ENCODE measurements at regions of chr2 and their contacts with region 1.

Region 1: DNA sequence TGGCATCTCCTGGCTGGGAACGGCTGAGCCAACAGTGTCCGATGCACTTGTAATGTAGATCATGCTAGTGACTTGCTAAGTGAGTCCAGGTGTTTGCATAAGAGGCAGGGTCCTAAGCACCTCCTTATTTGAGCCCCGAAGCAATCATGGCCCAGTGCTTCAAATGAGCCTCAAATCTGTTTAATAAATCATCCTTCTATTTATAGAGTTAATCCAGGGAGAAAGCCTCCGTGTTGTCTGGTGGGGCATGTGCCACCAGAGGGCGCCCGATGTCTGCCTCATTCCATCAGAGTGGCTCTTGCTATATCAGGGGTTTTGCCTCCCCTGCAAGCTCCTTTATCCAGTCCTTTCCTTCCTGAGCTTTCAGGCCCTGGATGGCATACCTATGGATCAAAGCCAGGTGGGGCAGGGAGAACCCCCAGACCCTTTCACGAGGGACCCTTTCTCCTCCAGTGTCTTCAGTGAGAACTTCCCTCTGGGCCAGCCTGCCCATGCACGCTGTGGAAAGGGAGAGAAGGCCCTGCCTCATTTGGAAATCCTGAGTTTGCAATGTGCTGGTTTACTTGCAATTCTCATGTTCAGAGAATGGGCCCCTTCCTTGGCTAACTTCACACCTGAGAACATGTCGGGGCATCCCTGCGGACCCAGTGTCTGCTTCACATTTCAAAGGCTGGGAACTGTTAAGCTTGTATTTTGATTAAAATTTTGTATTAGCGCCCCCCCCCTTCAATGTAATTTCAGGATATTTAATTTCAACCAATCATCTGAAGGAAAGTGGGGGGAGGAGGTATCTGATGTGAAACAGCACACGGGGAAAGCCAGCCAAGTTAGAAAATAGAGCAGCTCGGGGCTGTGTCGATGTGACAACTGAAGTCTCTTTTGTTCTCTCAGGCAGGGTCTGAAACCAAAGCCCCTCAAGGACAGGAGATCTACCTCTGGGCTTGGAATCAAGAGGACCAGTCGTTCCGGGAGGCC is 39.7 kb downstream of the RDH14 start:
- DNase-seq: peak; percentile 50
- H3K4me3 ChIP-seq: no peak overlapping the region
- H3K27ac ChIP-seq: no peak overlapping the region
- H3K4me1 ChIP-seq: no peaks in the 10 kb centered on the region
- H3K27me3 ChIP-seq: no peaks in the 10 kb centered on the region
- CTCF ChIP-seq: peak; percentile 91 to 92

Region 2: GRCh38 chr2:17962876-17963275 is 557.9 kb before region 1 on chr2:
- CTCF ChIA-PET with region 1: no interaction called
- dilution Hi-C with region 1: no loop called
- in situ Hi-C with region 1: no loop called
- intact Hi-C with region 1: no loop called
- DNase-seq: peak; percentile 19
- H3K4me3 ChIP-seq: no peak overlapping the region
- H3K27ac ChIP-seq: no peak overlapping the region
- H3K4me1 ChIP-seq: no peaks in the 10 kb centered on the region
- H3K27me3 ChIP-seq: no peaks in the 10 kb centered on the region
- CTCF ChIP-seq: no peak

Region 3: DNA sequence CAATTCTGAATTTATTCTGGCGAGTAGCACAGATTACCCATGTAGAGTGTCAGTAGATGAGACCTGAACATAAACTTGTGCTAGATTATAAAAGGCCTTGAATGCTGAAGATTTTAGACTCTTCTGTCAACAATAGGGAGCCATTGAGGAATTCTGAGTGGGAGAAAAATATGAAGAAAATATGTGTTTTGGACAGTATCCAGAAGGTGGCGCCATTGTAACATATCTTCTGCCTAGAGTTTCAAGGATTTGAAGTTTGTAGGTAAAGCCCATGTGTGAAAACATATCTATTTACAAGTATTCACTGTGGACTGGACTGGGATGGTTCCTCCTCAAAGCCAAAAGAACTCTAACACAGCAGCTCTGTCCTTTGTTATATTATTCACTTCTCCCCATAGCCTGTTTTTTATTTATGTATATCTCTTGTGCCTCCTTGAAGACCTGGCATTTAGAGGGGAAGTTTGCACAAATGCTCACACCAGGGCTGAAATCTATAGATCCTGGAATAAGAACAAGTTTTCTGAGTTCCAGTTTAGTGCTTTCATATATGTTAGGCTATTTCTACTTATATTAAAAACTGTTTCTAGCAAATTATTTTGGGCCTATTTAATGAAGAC is 85.2 kb before region 1 on chr2:
- CTCF ChIA-PET with region 1: no interaction called
- dilution Hi-C with region 1: no loop called
- in situ Hi-C with region 1: no loop called
- intact Hi-C with region 1: loop called (anchors 1 kb)
- DNase-seq: peak; percentile 31
- H3K4me3 ChIP-seq: no peak overlapping the region
- H3K27ac ChIP-seq: no peak overlapping the region
- H3K4me1 ChIP-seq: no peaks in the 10 kb centered on the region
- H3K27me3 ChIP-seq: no peaks in the 10 kb centered on the region
- CTCF ChIP-seq: peak; percentile 61 to 68

Region 4: GRCh38 chr2:18749912-18750526 is 229.3 kb after region 1 on chr2:
- CTCF ChIA-PET with region 1: no interaction called
- dilution Hi-C with region 1: no loop called
- in situ Hi-C with region 1: no loop called
- intact Hi-C with region 1: loop called (anchors 1 kb)
- DNase-seq: peak; percentile 35
- H3K4me3 ChIP-seq: no peak overlapping the region
- H3K27ac ChIP-seq: no peak overlapping the region
- H3K4me1 ChIP-seq: peaks cover 9% of the 10 kb centered on the region
- H3K27me3 ChIP-seq: no peaks in the 10 kb centered on the region
- CTCF ChIP-seq: peak; percentile 73 to 81

Region 5: GRCh38 chr2:18987592-18988073 is 466.9 kb after region 1 on chr2:
- CTCF ChIA-PET with region 1: no interaction called
- dilution Hi-C with region 1: no loop called
- in situ Hi-C with region 1: no loop called
- intact Hi-C with region 1: loop called (anchors 10 kb)
- DNase-seq: peak; percentile 86
- H3K4me3 ChIP-seq: no peak overlapping the region
- H3K27ac ChIP-seq: no peak overlapping the region
- H3K4me1 ChIP-seq: peaks cover 28% of the 10 kb centered on the region
- H3K27me3 ChIP-seq: no peaks in the 10 kb centered on the region
- CTCF ChIP-seq: peak; percentile 24 to 32

Region 6: DNA sequence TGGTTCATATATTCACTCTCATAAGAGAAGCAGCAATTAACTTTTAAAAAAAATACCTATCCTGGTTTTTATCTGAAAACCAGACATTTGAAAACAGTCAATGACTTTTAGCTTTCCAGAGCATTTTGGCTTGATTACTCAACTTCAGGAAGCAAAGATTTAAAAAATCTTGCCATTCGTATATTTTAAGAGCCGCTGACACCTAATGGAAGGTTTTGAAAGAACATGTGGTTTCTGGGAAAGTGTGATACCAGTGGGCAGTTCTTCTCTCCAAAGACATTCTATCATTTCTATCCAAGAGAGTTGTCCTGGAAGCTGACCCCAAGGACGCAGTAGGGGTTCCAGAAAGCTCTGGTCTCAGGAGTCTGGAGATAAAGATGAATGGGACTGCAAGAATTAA is 1146.3 kb after region 1 on chr2:
- CTCF ChIA-PET with region 1: no interaction called
- dilution Hi-C with region 1: no loop called
- in situ Hi-C with region 1: no loop called
- intact Hi-C with region 1: loop called (anchors 5 kb)
- DNase-seq: peak; percentile 54
- H3K4me3 ChIP-seq: no peak overlapping the region
- H3K27ac ChIP-seq: no peak overlapping the region
- H3K4me1 ChIP-seq: peaks cover 16% of the 10 kb centered on the region
- H3K27me3 ChIP-seq: no peaks in the 10 kb centered on the region
- CTCF ChIP-seq: peak; percentile 28 to 63